Caco-2 (cell line): ENCODE measurements at regions of chr2 and their contacts with region 1.

Region 1: GRCh38 chr2:46171411-46171953 is 125.7 kb upstream of the EPAS1 start:
- DNase-seq: no peak
- H3K4me3 ChIP-seq: no peak overlapping the region
- H3K4me3 Mint-ChIP-seq: no peak overlapping the region
- H3K27ac Mint-ChIP-seq: no peak overlapping the region
- H3K4me1 ChIP-seq: peaks cover 79% of the 10 kb centered on the region
- H3K4me1 Mint-ChIP-seq: peaks cover 56% of the 10 kb centered on the region
- H3K27me3 ChIP-seq: no peaks in the 10 kb centered on the region
- H3K27me3 Mint-ChIP-seq: no peaks in the 10 kb centered on the region
- CTCF ChIP-seq: no peak

Region 2: GRCh38 chr2:46002507-46002883 is 169.0 kb before region 1 on chr2:
- CTCF ChIA-PET with region 1: no interaction called
- POLR2A ChIA-PET with region 1: no interaction called
- intact Hi-C with region 1: loop called (anchors 2 kb)
- DNase-seq: peak; percentile 71 to 72
- H3K4me3 ChIP-seq: no peak overlapping the region
- H3K4me3 Mint-ChIP-seq: no peak overlapping the region
- H3K27ac Mint-ChIP-seq: peak overlapping the region; percentile 67
- H3K4me1 ChIP-seq: peaks cover 41% of the 10 kb centered on the region
- H3K4me1 Mint-ChIP-seq: peaks cover 53% of the 10 kb centered on the region
- H3K27me3 ChIP-seq: no peaks in the 10 kb centered on the region
- H3K27me3 Mint-ChIP-seq: no peaks in the 10 kb centered on the region
- CTCF ChIP-seq: no peak

Region 3: DNA sequence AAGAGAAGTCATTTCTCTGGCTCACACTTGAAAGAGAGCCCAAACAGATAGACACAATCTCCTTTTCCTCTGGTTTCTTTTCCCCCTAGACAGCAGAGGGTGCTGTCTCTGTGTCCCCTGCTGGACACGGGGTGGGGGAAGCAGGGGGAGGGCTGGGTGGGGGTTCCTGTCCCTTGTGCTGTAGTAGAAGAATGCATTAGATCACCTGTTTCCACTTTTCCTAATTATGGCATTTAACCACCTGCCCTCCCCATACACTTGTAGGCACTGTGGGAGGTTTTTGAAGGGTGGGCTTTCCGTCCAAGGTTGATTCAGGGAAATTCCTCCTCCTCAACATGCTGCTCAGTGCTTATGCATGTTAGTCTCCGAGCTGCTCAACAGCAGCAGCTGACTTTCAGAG is 80.5 kb before region 1 on chr2:
- CTCF ChIA-PET with region 1: no interaction called
- POLR2A ChIA-PET with region 1: no interaction called
- intact Hi-C with region 1: loop called (anchors 5 kb)
- DNase-seq: no peak
- H3K4me3 ChIP-seq: no peak overlapping the region
- H3K4me3 Mint-ChIP-seq: no peak overlapping the region
- H3K27ac Mint-ChIP-seq: no peak overlapping the region
- H3K4me1 ChIP-seq: no peaks in the 10 kb centered on the region
- H3K4me1 Mint-ChIP-seq: no peaks in the 10 kb centered on the region
- H3K27me3 ChIP-seq: no peaks in the 10 kb centered on the region
- H3K27me3 Mint-ChIP-seq: no peaks in the 10 kb centered on the region
- CTCF ChIP-seq: peak; percentile 33 to 61

Region 4: GRCh38 chr2:46122318-46122976 is 49.0 kb before region 1 on chr2:
- CTCF ChIA-PET with region 1: no interaction called
- POLR2A ChIA-PET with region 1: no interaction called
- intact Hi-C with region 1: loop called (anchors 5 kb)
- DNase-seq: no peak
- H3K4me3 ChIP-seq: no peak overlapping the region
- H3K4me3 Mint-ChIP-seq: no peak overlapping the region
- H3K27ac Mint-ChIP-seq: no peak overlapping the region
- H3K4me1 ChIP-seq: peaks cover 13% of the 10 kb centered on the region
- H3K4me1 Mint-ChIP-seq: peaks cover 32% of the 10 kb centered on the region
- H3K27me3 ChIP-seq: no peaks in the 10 kb centered on the region
- H3K27me3 Mint-ChIP-seq: no peaks in the 10 kb centered on the region
- CTCF ChIP-seq: no peak